ENCODE measurements at regions of chr7 and their contacts with region 1.

Region 1: DNA sequence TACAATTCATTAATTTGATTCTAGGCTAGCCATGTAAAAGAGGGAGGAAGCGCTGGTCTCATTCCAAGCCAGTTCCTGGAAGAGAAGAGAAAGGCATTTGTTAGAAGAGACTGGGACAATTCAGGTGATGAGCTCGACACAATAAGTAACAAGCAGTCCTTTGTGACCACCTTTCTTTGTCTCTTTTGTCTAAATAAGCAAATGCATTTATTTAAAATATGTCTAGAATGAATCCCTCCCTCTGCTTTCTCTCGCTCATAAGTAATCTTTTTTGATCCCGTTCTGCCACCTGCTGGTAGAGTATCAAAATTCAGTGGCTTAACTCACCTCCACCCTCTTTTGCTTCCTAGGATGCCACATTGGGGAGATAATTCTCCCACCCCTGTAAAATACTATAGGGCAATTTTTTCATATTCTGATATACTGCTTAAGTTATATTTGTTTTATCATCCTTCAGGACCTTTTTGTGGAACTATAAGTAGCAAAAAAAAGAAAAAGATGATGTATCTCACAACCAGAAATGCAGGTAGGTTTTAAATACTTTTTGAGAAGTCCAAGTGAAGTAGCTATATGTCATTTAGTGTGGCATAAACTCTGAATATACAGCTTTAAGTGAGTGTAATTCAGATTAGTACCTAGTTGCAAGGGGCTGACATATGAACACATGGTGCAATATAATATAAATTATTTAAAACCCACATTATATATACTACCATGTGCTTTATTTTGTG is 91.5 kb downstream of the GSDME start:
- DNase-seq: peak; percentile 61
- ATAC-seq: peak; percentile 47
- H3K4me3 Mint-ChIP-seq: no peak overlapping the region
- H3K27ac Mint-ChIP-seq: no peak overlapping the region
- H3K4me1 Mint-ChIP-seq: peaks cover 3% of the 10 kb centered on the region
- H3K27me3 Mint-ChIP-seq: no peaks in the 10 kb centered on the region

Region 2: GRCh38 chr7:23546897-23547572 is 1118.7 kb before region 1 on chr7:
- CTCF ChIA-PET with region 1: no interaction called
- POLR2A ChIA-PET with region 1: no interaction called
- intact Hi-C with region 1: loop called in 1 of 2 experiments (anchors 10 kb)
- DNase-seq: peak; percentile 83
- ATAC-seq: peak; percentile 83
- H3K4me3 Mint-ChIP-seq: no peak overlapping the region
- H3K27ac Mint-ChIP-seq: no peak overlapping the region
- H3K4me1 Mint-ChIP-seq: peaks cover 5% of the 10 kb centered on the region
- H3K27me3 Mint-ChIP-seq: peaks cover 2% of the 10 kb centered on the region

Region 3: GRCh38 chr7:23938937-23939552 is 726.7 kb before region 1 on chr7:
- CTCF ChIA-PET with region 1: no interaction called
- POLR2A ChIA-PET with region 1: no interaction called
- intact Hi-C with region 1: loop called in 1 of 2 experiments (anchors 10 kb)
- DNase-seq: peak; percentile 18
- ATAC-seq: peak; percentile 51
- H3K4me3 Mint-ChIP-seq: no peak overlapping the region
- H3K27ac Mint-ChIP-seq: no peak overlapping the region
- H3K4me1 Mint-ChIP-seq: no peaks in the 10 kb centered on the region
- H3K27me3 Mint-ChIP-seq: peaks cover 20% of the 10 kb centered on the region

Region 4: GRCh38 chr7:24401628-24402593 is 263.8 kb before region 1 on chr7:
- CTCF ChIA-PET with region 1: interaction called, 3 read pairs
- POLR2A ChIA-PET with region 1: no interaction called
- intact Hi-C with region 1: loop called (anchors 1 to 5 kb)
- DNase-seq: no peak
- ATAC-seq: no peak
- H3K4me3 Mint-ChIP-seq: no peak overlapping the region
- H3K27ac Mint-ChIP-seq: no peak overlapping the region
- H3K4me1 Mint-ChIP-seq: peaks cover 8% of the 10 kb centered on the region
- H3K27me3 Mint-ChIP-seq: no peaks in the 10 kb centered on the region

Region 5: GRCh38 chr7:24572997-24573625 is 92.6 kb before region 1 on chr7 and contains the start of gene PALS2:
- CTCF ChIA-PET with region 1: interaction called, 31 read pairs
- POLR2A ChIA-PET with region 1: no interaction called
- intact Hi-C with region 1: loop called (anchors 1 kb)
- DNase-seq: peak; percentile 86
- ATAC-seq: peak; percentile 68
- H3K4me3 Mint-ChIP-seq: peak within 1 kb of the TSS; percentile 88
- H3K27ac Mint-ChIP-seq: peak within 1 kb of the TSS; percentile 86
- H3K4me1 Mint-ChIP-seq: peaks cover 34% of the 10 kb centered on the region
- H3K27me3 Mint-ChIP-seq: peaks cover 12% of the 10 kb centered on the region
- total RNA-seq, gene PALS2: 20.8 to 41.7 TPM

Region 6: DNA sequence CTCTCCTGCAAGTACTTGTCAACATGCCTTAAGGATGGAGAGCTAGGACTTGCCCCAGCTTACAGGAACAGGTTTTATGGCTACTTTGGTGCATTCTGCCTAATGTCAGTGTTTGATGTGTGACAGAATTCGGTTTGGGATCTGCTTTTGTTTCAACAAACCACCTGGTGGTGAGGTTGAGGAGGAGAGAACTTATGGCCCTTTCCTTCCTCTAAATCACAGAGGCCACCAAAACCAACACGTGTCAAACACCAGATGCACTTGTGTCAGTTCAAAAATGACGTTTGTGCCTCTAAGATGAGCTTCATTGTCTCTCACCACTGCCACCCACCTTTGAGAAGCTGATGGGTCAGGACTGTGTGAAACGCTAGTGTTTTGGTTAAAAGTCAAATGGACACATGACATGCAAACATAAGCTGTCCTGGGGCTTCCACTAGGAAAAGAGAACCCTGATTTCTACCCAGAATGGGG is 230.3 kb after region 1 on chr7:
- CTCF ChIA-PET with region 1: no interaction called
- POLR2A ChIA-PET with region 1: no interaction called
- intact Hi-C with region 1: no loop called
- DNase-seq: no peak
- ATAC-seq: peak; percentile 60
- H3K4me3 Mint-ChIP-seq: no peak overlapping the region
- H3K27ac Mint-ChIP-seq: peak overlapping the region; percentile 26
- H3K4me1 Mint-ChIP-seq: peaks cover 53% of the 10 kb centered on the region
- H3K27me3 Mint-ChIP-seq: no peaks in the 10 kb centered on the region

Region 7: DNA sequence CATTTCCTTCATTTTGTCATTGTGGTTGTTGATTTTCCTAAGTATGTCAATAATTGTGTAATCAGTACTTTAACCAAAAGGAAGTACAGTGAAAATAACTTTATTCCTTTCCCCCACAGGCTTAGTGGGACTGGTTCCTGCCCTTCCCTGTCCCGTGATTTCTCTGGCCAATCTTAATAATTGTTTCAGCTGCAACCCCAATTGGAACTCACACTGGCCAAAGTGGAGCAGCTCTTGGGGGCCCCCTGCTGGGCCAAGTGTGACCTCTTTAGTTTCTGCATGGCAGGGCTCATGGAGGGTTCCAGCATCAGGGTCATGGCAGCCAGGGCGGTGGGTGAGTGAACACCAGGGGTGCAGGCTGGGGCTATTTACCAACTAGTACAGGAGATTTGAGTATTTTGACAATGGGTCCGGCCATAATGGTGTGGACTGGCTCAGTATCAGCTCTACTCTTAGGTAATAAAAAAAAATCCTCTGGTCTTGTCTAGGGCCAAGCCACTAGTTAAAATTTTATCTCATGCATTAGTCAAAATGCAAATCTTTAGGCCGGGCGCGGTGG is 427.6 kb after region 1 on chr7:
- CTCF ChIA-PET with region 1: interaction called, 5 read pairs
- POLR2A ChIA-PET with region 1: no interaction called
- intact Hi-C with region 1: loop called in 1 of 2 experiments (anchors 10 kb)
- DNase-seq: peak; percentile 90
- ATAC-seq: peak; percentile 91
- H3K4me3 Mint-ChIP-seq: no peak overlapping the region
- H3K27ac Mint-ChIP-seq: no peak overlapping the region
- H3K4me1 Mint-ChIP-seq: peaks cover 12% of the 10 kb centered on the region
- H3K27me3 Mint-ChIP-seq: peaks cover 2% of the 10 kb centered on the region

Region 8: DNA sequence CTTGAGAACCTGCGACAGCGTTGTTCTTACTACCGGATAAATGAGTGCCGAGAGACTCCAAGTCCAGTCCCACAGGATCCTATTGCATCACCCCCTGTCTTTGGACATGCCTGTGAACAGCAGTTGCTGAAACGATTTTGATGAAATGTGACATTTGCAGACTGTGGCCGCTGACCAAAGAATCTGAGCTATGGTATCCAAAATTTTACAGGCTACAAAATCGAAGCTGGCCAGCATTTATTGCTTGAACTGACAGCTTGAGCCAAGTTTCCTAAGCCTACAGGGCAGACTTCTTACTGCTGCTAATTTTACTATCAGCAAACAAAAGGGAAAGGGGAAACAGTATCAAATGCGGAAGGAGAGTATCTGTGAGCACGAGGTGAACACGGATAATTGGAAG is 574.6 kb after region 1 on chr7:
- CTCF ChIA-PET with region 1: no interaction called
- POLR2A ChIA-PET with region 1: no interaction called
- intact Hi-C with region 1: no loop called
- DNase-seq: no peak
- ATAC-seq: no peak
- H3K4me3 Mint-ChIP-seq: no peak overlapping the region
- H3K27ac Mint-ChIP-seq: no peak overlapping the region
- H3K4me1 Mint-ChIP-seq: no peaks in the 10 kb centered on the region
- H3K27me3 Mint-ChIP-seq: peaks cover 4% of the 10 kb centered on the region

Region 9: GRCh38 chr7:25520017-25520416 is 854.3 kb after region 1 on chr7:
- CTCF ChIA-PET with region 1: no interaction called
- POLR2A ChIA-PET with region 1: no interaction called
- intact Hi-C with region 1: no loop called
- DNase-seq: no peak
- ATAC-seq: no peak
- H3K4me3 Mint-ChIP-seq: no peak overlapping the region
- H3K27ac Mint-ChIP-seq: peak overlapping the region; percentile 67
- H3K4me1 Mint-ChIP-seq: peaks cover 41% of the 10 kb centered on the region
- H3K27me3 Mint-ChIP-seq: no peaks in the 10 kb centered on the region

Measured in activated CD4-positive, alpha-beta T cell treated with anti-CD3 and anti-CD28 coated beads for 36 hours (primary cell).